Esophagus muscularis mucosa (tissue), 4 donors: ENCODE measurements at regions of chr11 and their contacts with region 1.

Region 1: DNA sequence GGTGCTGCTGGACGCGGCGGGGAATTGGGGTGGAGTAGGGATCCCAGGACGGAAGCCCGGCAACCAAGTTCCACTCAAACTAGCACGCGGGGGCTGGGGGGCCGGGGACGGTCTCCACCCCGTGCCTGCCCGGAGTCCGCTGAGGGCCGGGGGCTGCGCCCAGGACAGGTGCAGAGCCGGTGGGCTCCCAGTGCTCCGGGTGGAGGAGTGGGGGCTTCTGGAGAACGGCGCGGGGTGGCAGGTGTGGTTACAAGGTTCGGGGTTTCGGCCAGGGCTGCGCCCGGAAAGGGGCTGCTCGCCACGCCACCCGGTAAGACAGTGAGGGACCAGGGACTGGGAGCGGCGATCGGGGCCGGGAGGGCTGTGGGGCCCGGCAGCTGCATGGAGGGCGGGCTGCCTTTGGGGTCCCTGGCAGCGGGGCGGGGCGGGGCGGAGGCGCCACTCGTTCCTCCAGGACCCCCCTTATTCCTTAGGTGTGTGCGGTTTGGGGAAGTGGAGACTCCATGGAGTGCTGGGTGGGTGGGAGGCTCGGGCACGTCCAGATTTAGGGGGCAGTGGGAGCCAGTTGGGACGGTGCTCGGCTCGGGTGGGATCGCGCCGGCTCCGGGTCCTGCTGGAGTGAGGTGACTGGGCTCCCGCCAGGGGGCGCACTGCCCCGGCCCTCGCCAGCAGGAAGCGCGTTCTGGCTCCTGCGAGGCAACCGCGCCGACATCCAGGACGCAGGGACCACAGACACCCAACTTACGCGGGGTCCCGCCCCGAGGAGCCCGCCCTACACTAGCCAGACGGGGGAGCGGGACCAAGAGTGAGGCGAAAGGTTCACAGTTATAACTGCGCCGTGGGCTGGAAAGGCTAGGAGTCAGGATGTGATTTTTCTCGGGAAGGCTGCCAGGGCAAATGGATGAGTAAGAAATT is 868 bp downstream of the TSPAN18 start:
- DNase-seq: peak; percentile 95
- H3K4me3 ChIP-seq: peak overlapping the region; percentile 63 to 93 (median 76)
- H3K27ac ChIP-seq: peak overlapping the region; percentile 88 to 93 (median 88)
- H3K4me1 ChIP-seq: peaks cover 51 to 74% (median 72%) of the 10 kb centered on the region in 4 donors
- H3K27me3 ChIP-seq: no peaks in the 10 kb centered on the region
- CTCF ChIP-seq: peak; percentile 87 to 96 (median 94)
- EP300 ChIP-seq: no peak
- POLR2A ChIP-seq: no peak

Region 2: DNA sequence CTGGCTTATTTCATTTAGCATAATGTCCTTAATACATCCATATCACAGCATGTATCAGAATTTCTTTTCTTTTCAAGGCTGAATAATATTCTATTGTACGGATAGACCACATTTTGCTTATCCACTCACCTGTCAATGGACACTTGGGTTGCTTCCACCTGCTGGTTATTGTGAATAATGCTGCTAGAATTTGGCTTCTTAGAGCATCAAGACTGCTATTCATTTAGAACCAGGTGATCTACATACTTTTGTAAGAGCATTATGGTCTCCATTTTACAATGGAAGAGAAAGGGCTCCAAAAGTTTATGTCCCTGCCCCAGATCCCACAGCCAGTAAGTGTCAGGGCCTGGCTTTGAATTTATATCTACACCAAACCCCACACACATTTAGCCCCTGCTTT is 262.9 kb before region 1 on chr11:
- intact Hi-C with region 1: no loop called
- DNase-seq: no peak
- H3K4me3 ChIP-seq: no peak overlapping the region
- H3K27ac ChIP-seq: no peak overlapping the region
- H3K4me1 ChIP-seq: peaks cover 0 to 10% (median 5%) of the 10 kb centered on the region in 4 donors
- H3K27me3 ChIP-seq: peaks cover 0 to 26% (median 0%) of the 10 kb centered on the region in 4 donors
- CTCF ChIP-seq: no peak
- EP300 ChIP-seq: no peak
- POLR2A ChIP-seq: no peak

Region 3: DNA sequence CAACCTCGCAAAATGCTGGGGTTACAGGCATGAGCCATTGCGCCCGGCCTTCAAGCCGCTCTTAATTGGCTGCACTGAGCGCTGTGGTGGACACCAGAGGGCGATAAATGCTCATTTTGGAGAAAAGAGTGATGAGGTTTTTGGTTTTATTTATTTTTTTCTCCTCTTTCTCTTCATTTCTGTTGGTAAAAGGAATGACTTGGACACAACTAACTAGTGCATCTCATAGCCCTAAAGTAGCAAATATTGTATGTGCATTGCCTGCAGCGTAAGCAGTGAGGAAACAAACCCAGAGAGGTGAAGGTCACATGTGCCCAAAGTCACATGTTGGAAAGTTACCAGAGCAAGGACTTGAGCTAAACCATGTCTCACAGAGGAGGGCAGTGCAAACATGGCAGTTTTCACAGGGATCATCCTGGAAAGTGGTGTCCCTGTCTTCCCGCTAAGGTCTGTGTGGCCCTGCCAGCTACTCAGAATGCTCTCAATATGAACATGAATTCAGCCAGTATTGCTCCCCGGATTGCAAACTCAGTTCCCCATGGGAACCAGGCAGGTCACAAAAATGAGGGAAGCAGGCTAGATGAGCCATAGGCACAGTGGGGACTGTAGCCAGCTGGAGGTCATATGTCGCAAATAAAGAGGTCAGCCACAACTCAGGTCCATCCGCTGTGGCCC is 170.8 kb before region 1 on chr11:
- intact Hi-C with region 1: loop called (anchors 5 kb)
- DNase-seq: no peak
- H3K4me3 ChIP-seq: no peak overlapping the region
- H3K27ac ChIP-seq: no peak overlapping the region
- H3K4me1 ChIP-seq: peaks cover 3 to 8% (median 6%) of the 10 kb centered on the region in 4 donors
- H3K27me3 ChIP-seq: no peaks in the 10 kb centered on the region
- CTCF ChIP-seq: peak; percentile 78 to 89 (median 82)
- EP300 ChIP-seq: no peak
- POLR2A ChIP-seq: no peak

Region 4: DNA sequence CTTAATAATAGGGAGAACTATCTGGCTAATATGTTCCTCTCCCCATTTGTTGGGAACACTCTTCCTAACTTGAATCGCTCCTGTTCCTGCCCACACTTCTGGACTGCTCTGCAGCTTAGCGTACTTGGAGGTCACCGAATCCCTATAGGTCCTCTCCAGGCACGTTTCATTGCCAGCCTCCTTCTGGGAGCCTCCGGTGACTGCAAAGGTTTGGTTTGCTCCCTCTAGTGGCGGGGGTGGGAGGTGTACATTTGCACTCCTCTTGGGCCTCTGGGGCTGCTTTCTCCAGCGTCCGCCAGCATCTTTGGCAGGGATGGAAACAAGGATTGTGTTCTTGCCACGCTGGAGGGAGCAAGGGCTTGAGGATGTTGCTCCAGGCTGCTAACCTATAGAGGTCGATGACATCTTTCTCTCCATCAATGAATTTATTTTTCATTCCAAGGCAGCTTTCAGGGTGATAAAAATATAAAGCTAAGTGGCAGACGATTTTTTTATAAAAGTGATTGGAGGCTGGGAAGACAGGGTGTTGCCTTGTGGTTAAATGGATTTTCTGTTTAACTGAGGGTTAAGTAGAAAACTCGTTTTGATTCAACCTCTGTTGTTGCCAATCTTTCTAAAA is 47.8 kb after region 1 on chr11:
- intact Hi-C with region 1: loop called (anchors 5 kb)
- DNase-seq: no peak
- H3K4me3 ChIP-seq: no peak overlapping the region
- H3K27ac ChIP-seq: peak overlapping the region; percentile 78 to 85 (median 80)
- H3K4me1 ChIP-seq: peaks cover 58 to 89% (median 83%) of the 10 kb centered on the region in 4 donors
- H3K27me3 ChIP-seq: no peaks in the 10 kb centered on the region
- CTCF ChIP-seq: peak; percentile 66 to 80 (median 74)
- EP300 ChIP-seq: no peak
- POLR2A ChIP-seq: no peak

Region 5: GRCh38 chr11:44893846-44894617 is 166.4 kb after region 1 on chr11:
- intact Hi-C with region 1: loop called (anchors 1 kb)
- DNase-seq: no peak
- H3K4me3 ChIP-seq: peak overlapping the region in 2 of 4 donors; percentile 16 to 37
- H3K27ac ChIP-seq: peak overlapping the region; percentile 78 to 86 (median 86)
- H3K4me1 ChIP-seq: peaks cover 17 to 50% (median 39%) of the 10 kb centered on the region in 4 donors
- H3K27me3 ChIP-seq: no peaks in the 10 kb centered on the region
- CTCF ChIP-seq: peak in 2 of 3 experiments; percentile 88 to 95
- EP300 ChIP-seq: no peak
- POLR2A ChIP-seq: no peak

Region 6: GRCh38 chr11:44911029-44911814 is 183.6 kb after region 1 on chr11:
- intact Hi-C with region 1: loop called (anchors 5 kb)
- DNase-seq: peak; percentile 98
- H3K4me3 ChIP-seq: no peak overlapping the region
- H3K27ac ChIP-seq: peak overlapping the region; percentile 13 to 45 (median 38)
- H3K4me1 ChIP-seq: peaks cover 17 to 38% (median 30%) of the 10 kb centered on the region in 4 donors
- H3K27me3 ChIP-seq: no peaks in the 10 kb centered on the region
- CTCF ChIP-seq: peak; percentile 81 to 87 (median 85)
- EP300 ChIP-seq: no peak
- POLR2A ChIP-seq: no peak